Left lung (tissue), 14 donors: ENCODE measurements at regions of chr10 and their contacts with region 1.

Region 1: GRCh38 chr10:31133628-31134302 is 102.1 kb upstream of the ZNF438 start:
- DNase-seq: peak; percentile 82 to 96 (median 88)
- ATAC-seq: peak; percentile 93
- H3K4me3 ChIP-seq: peak overlapping the region; percentile 30 to 52
- H3K27ac ChIP-seq: peak overlapping the region; percentile 69 to 83
- H3K4me1 ChIP-seq: peaks cover 7 to 22% of the 10 kb centered on the region in 2 donors
- H3K27me3 ChIP-seq: no peaks in the 10 kb centered on the region
- CTCF ChIP-seq: no peak

Region 2: GRCh38 chr10:31697271-31698180 is 563.8 kb after region 1 on chr10:
- intact Hi-C with region 1: loop called in 1 of 2 experiments (anchors 10 kb)
- DNase-seq: peak in 3 of 4 donors; percentile 69 to 84 (median 83)
- ATAC-seq: peak; percentile 82
- H3K4me3 ChIP-seq: no peak overlapping the region
- H3K27ac ChIP-seq: peak overlapping the region; percentile 83 to 84
- H3K4me1 ChIP-seq: peaks cover 21 to 70% of the 10 kb centered on the region in 2 donors
- H3K27me3 ChIP-seq: no peaks in the 10 kb centered on the region
- CTCF ChIP-seq: no peak